A673 (cell line): ENCODE measurements at regions of chr13 and their contacts with region 1.

Region 1: GRCh38 chr13:23159760-23160637 is 20.8 kb upstream of the SGCG start:
- DNase-seq: peak; percentile 12
- H3K4me3 ChIP-seq: peak overlapping the region; percentile 47
- H3K27ac ChIP-seq: peak overlapping the region; percentile 64
- H3K4me1 ChIP-seq: no peaks in the 10 kb centered on the region
- H3K27me3 ChIP-seq: peaks cover 15% of the 10 kb centered on the region
- CTCF ChIP-seq: no peak

Region 2: GRCh38 chr13:23087880-23088279 is 72.1 kb before region 1 on chr13:
- CTCF ChIA-PET with region 1: interaction called, 3 read pairs
- POLR2A ChIA-PET with region 1: no interaction called
- intact Hi-C with region 1: loop called (anchors 5 kb)
- DNase-seq: peak; percentile 48
- H3K4me3 ChIP-seq: no peak overlapping the region
- H3K27ac ChIP-seq: no peak overlapping the region
- H3K4me1 ChIP-seq: peaks cover 8% of the 10 kb centered on the region
- H3K27me3 ChIP-seq: peaks cover 9% of the 10 kb centered on the region
- CTCF ChIP-seq: peak; percentile 65